K562 (cell line): ENCODE measurements at regions of chr19 and their contacts with region 1.

Region 1: GRCh38 chr19:28737021-28737895 is 475.7 kb downstream of the UQCRFS1 start:
- DNase-seq: peak in 2 of 4 experiments; percentile 27 to 28
- ATAC-seq: peak; percentile 82
- H3K4me3 ChIP-seq: no peak overlapping the region
- H3K27ac ChIP-seq: no peak overlapping the region
- H3K4me1 ChIP-seq: no peaks in the 10 kb centered on the region
- H3K27me3 ChIP-seq: no peaks in the 10 kb centered on the region; a peak in 1 of 5 replicates
- CTCF ChIP-seq: peak; percentile 37 to 77 (median 45); a peak in 5 of 6 replicates
- EP300 ChIP-seq: no peak
- POLR2A ChIP-seq: no peak
- RAD21 ChIP-seq: peak in 1 of 2 experiments; percentile 73; a peak in 2 of 4 replicates

Region 2: GRCh38 chr19:29162694-29163093 is 425.4 kb after region 1 on chr19:
- CTCF ChIA-PET with region 1: no interaction called
- POLR2A ChIA-PET with region 1: no interaction called
- in situ Hi-C with region 1: no loop called
- intact Hi-C with region 1: no loop called
- DNase-seq: no peak
- ATAC-seq: no peak
- H3K4me3 ChIP-seq: no peak overlapping the region
- H3K27ac ChIP-seq: no peak overlapping the region
- H3K4me1 ChIP-seq: no peaks in the 10 kb centered on the region
- H3K27me3 ChIP-seq: no peaks in the 10 kb centered on the region
- CTCF ChIP-seq: no peak
- EP300 ChIP-seq: no peak
- POLR2A ChIP-seq: no peak
- RAD21 ChIP-seq: no peak

Region 3: GRCh38 chr19:29263305-29264135 is 526.3 kb after region 1 on chr19:
- CTCF ChIA-PET with region 1: interaction called, 3 read pairs
- POLR2A ChIA-PET with region 1: no interaction called
- in situ Hi-C with region 1: loop called (anchors 10 kb)
- intact Hi-C with region 1: loop called (anchors 5 kb)
- DNase-seq: peak; percentile 57 to 68 (median 60)
- ATAC-seq: peak; percentile 83
- H3K4me3 ChIP-seq: no peak overlapping the region
- H3K27ac ChIP-seq: no peak overlapping the region
- H3K4me1 ChIP-seq: no peaks in the 10 kb centered on the region
- H3K27me3 ChIP-seq: peaks cover 5 to 17% of the 10 kb centered on the region in 2 experiments; a peak in 3 of 5 replicates
- CTCF ChIP-seq: peak; percentile 68 to 82 (median 76)
- EP300 ChIP-seq: no peak
- POLR2A ChIP-seq: no peak
- RAD21 ChIP-seq: peak in 1 of 2 experiments; percentile 69; a peak in 2 of 4 replicates

Region 4: DNA sequence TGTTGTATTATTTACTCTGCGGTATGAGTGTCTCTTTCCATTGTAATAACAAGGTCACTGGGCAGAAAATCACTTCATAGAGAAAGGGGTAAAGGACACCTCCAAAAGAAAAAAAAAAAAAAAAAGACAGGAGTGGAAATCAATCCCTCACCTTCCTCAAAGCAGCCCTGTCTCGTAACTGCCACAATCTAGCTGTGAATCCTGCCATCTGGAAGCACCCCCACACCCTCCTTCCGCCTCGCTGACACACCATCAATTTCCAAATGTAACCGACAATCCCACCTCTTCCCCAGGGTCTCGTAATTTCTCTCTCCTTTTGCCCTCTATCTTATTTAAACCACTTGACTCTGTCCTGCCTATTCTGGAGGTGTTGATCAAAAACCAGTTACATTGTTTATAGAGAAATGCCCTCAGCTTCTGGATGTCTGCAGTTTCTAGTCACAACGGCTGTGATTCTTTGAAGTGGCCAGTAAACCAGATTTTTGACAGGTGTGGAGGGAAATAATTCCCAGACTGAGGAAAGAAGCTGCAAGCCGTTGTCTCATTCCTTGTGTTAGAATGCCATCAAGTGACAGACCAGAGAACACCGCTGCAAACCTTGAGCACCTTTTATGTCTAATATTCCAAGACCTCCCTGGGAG is 859.7 kb after region 1 on chr19:
- CTCF ChIA-PET with region 1: no interaction called
- POLR2A ChIA-PET with region 1: no interaction called
- in situ Hi-C with region 1: loop called (anchors 25 kb)
- intact Hi-C with region 1: no loop called
- DNase-seq: peak in 1 of 4 experiments; percentile 45
- ATAC-seq: peak; percentile 47; the same call in 2 of the 3 replicates
- H3K4me3 ChIP-seq: no peak overlapping the region
- H3K27ac ChIP-seq: no peak overlapping the region
- H3K4me1 ChIP-seq: peaks cover 0 to 7% of the 10 kb centered on the region in 2 experiments; a peak in 2 of 5 replicates
- H3K27me3 ChIP-seq: peaks cover 3 to 6% of the 10 kb centered on the region in 2 experiments; a peak in 4 of 5 replicates
- CTCF ChIP-seq: peak; percentile 7 to 63 (median 39); a peak in 4 of 6 replicates
- EP300 ChIP-seq: no peak
- POLR2A ChIP-seq: no peak
- RAD21 ChIP-seq: peak; percentile 53 to 78